AG04450 (cell line): ENCODE measurements at regions of chr11 and their contacts with region 1.

Region 1: GRCh38 chr11:8192016-8192895 is 23.4 kb upstream of the RIC3 start:
- DNase-seq: peak; percentile 32
- H3K4me3 ChIP-seq: no peak overlapping the region
- H3K27ac ChIP-seq: no peak overlapping the region
- H3K27me3 ChIP-seq: peaks cover 9% of the 10 kb centered on the region
- CTCF ChIP-seq: peak; percentile 91

Region 2: DNA sequence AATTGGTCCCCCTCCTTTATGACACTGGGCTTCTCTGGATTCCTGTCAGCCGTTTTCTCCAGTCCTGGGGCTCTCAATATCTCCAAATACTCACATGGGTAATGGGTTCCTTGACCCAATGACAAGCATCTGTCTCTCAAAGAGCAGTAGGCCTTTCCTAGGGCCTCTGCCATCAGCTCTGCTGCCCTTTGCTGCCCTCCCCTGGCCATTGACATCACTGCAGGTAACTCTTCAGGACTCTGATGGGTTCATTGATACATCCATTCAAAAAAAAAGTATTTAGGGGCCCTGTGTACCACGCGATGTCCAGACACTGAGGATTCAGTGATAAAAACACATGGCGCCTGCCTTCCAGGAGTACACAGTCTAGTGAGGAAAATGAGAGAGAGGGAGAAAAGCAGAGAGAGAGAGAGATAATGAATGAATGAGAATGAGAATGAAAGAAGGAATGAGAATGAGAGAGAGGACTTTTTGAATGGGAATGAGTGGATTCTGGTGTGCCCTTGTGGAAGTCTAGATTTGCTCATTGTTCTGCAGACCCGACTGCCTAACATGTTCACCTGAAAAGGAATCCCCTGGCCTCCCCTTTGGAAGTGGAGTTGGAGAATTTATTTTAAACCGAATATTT is 749.6 kb before region 1 on chr11:
- CTCF ChIA-PET with region 1: no interaction called
- POLR2A ChIA-PET with region 1: no interaction called
- DNase-seq: peak; percentile 2
- H3K4me3 ChIP-seq: no peak overlapping the region
- H3K27ac ChIP-seq: no peak overlapping the region
- H3K27me3 ChIP-seq: peaks cover 5% of the 10 kb centered on the region
- CTCF ChIP-seq: peak; percentile 86

Region 3: DNA sequence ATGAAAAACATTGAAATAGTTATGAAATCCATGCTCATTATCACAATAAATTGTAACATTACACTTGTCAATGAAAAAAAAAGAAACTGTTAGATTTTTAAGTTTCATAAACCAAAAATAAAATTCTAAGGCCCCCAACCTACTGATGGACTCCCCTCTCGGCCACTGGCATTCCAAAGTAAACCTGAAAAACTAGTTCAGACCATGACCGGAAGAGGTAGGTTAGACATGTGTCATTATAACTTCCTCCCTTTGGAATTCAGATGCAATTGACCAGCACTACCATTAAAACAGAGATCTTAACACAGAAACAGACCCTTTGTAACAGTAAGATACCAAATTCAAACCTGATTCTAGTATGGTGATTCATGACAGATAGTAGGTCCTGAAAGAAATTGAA is 274.1 kb before region 1 on chr11:
- CTCF ChIA-PET with region 1: no interaction called
- POLR2A ChIA-PET with region 1: no interaction called
- DNase-seq: no peak
- H3K4me3 ChIP-seq: no peak overlapping the region
- H3K27ac ChIP-seq: no peak overlapping the region
- H3K27me3 ChIP-seq: no peaks in the 10 kb centered on the region
- CTCF ChIP-seq: no peak

Region 4: GRCh38 chr11:8180469-8180868 is 11.8 kb before region 1 on chr11:
- CTCF ChIA-PET with region 1: interaction called, 17 read pairs
- POLR2A ChIA-PET with region 1: no interaction called
- DNase-seq: no peak
- H3K4me3 ChIP-seq: no peak overlapping the region
- H3K27ac ChIP-seq: no peak overlapping the region
- H3K27me3 ChIP-seq: peaks cover 6% of the 10 kb centered on the region
- CTCF ChIP-seq: no peak

Region 5: GRCh38 chr11:8206251-8207079 is 14.2 kb after region 1 on chr11:
- CTCF ChIA-PET with region 1: interaction called, 16 read pairs
- POLR2A ChIA-PET with region 1: no interaction called
- DNase-seq: no peak
- H3K4me3 ChIP-seq: no peak overlapping the region
- H3K27ac ChIP-seq: no peak overlapping the region
- H3K27me3 ChIP-seq: peaks cover 8% of the 10 kb centered on the region
- CTCF ChIP-seq: no peak

Region 6: DNA sequence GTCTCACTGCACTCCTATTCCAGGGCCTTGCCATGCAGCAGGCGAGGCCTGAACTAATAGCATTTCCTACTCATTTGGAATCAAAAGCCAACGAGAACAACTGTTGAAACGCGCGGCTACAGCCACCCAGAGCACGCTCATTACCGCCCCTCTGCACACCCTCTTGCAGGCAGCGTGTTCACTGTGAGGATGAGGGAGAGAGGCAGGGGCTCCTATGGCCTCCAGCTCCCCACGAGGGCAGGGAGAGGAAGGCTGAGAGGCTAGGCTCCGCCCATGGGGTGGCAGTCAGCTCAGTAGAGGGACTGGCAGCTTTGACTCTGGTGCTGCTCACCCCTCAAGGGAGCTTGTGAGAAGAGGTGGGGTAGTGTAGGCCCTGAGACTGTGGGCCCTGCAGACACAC is 45.2 kb after region 1 on chr11:
- CTCF ChIA-PET with region 1: interaction called, 10 read pairs
- POLR2A ChIA-PET with region 1: no interaction called
- DNase-seq: no peak
- H3K4me3 ChIP-seq: no peak overlapping the region
- H3K27ac ChIP-seq: no peak overlapping the region
- H3K27me3 ChIP-seq: peaks cover 13% of the 10 kb centered on the region
- CTCF ChIP-seq: no peak